Endothelial cell of umbilical vein (primary cell): ENCODE measurements at regions of chr3 and their contacts with region 1.

Region 1: GRCh38 chr3:186772701-186773424 is 10.5 kb upstream of the EIF4A2 start:
- DNase-seq: peak; percentile 39
- H3K4me3 ChIP-seq: peak overlapping the region; percentile 30 to 53 (median 34)
- H3K27ac ChIP-seq: no peak overlapping the region
- H3K4me1 ChIP-seq: peaks cover 6% of the 10 kb centered on the region
- H3K27me3 ChIP-seq: no peaks in the 10 kb centered on the region
- CTCF ChIP-seq: no peak
- POLR2A ChIP-seq: no peak

Region 2: GRCh38 chr3:186589121-186589520 is 183.7 kb before region 1 on chr3:
- CTCF ChIA-PET with region 1: no interaction called
- POLR2A ChIA-PET with region 1: no interaction called
- dilution Hi-C with region 1: no loop called
- intact Hi-C with region 1: no loop called
- DNase-seq: no peak
- H3K4me3 ChIP-seq: no peak overlapping the region
- H3K27ac ChIP-seq: no peak overlapping the region
- H3K4me1 ChIP-seq: no peaks in the 10 kb centered on the region
- H3K27me3 ChIP-seq: no peaks in the 10 kb centered on the region
- CTCF ChIP-seq: no peak
- POLR2A ChIP-seq: no peak

Region 3: DNA sequence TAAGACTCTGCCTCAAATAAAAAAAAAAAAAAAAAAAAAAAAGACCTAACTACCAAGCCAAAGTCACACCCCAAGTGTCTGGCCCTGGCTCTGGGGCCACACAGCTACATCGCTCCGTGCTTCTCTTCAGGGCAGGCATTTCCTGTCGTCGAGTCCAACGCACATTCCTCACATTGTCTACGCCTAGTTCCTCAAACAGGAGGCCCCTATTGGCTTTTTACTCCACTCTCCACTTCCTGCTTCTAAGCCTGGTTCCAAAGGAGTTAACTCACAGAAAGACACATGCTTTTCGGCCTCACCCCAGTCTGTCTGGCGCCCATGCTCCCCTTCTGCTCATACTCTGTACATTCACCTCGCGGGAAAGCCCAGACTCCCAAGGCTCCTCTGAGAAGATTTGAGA is 26.9 kb before region 1 on chr3:
- CTCF ChIA-PET with region 1: no interaction called
- POLR2A ChIA-PET with region 1: no interaction called
- dilution Hi-C with region 1: no loop called
- intact Hi-C with region 1: loop called (anchors 2 kb)
- DNase-seq: peak; percentile 53
- H3K4me3 ChIP-seq: no peak overlapping the region
- H3K27ac ChIP-seq: peak overlapping the region; percentile 53
- H3K4me1 ChIP-seq: peaks cover 6% of the 10 kb centered on the region
- H3K27me3 ChIP-seq: peaks cover 2% of the 10 kb centered on the region in 2 experiments
- CTCF ChIP-seq: no peak
- POLR2A ChIP-seq: no peak

Region 4: DNA sequence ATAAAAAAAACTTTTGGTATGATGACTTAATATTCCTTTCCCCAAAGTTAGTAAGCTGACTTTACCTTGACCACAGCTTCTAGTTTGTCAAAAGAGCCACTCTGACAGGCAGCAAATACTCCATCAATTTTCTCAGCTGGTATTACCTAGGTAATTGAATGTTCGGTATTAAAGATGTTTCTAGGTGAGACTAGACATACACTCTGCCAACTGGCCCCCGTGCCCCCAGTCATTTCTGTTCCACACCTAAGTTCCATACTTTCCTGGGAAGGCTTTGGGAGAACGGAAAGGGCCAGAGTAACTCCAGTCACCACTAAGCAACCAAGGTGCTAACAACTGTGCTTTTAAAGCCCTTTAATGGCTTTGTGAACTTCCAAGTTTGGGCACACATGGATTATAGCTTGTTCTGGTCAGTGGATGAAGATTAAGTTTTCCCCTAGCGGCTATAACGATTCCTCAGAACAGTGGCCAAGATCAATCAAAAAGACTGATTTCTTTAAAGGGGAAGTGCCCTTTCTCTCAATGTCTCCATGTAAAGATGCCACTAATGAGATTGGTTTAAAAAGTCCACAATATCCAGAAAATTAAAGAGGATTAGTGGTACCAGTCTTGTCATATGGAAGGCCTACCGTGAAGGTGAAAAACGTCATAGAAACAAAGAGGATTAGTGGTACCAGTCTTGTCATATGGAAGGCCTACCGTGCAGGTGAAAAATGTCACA is 17.6 kb after region 1 on chr3:
- CTCF ChIA-PET with region 1: no interaction called
- POLR2A ChIA-PET with region 1: no interaction called
- dilution Hi-C with region 1: no loop called
- intact Hi-C with region 1: no loop called
- DNase-seq: peak; percentile 50
- H3K4me3 ChIP-seq: no peak overlapping the region
- H3K27ac ChIP-seq: no peak overlapping the region
- H3K4me1 ChIP-seq: peaks cover 22% of the 10 kb centered on the region
- H3K27me3 ChIP-seq: no peaks in the 10 kb centered on the region
- CTCF ChIP-seq: peak in 1 of 2 donors; percentile 4
- POLR2A ChIP-seq: peak; percentile 75